ENCODE measurements at regions of chr1 and their contacts with region 1.

Region 1: GRCh38 chr1:74733604-74734484 is 892 bp downstream of the TYW3 start:
- DNase-seq: peak; percentile 24
- H3K4me3 Mint-ChIP-seq: peak overlapping the region; percentile 89
- H3K27ac Mint-ChIP-seq: peak overlapping the region; percentile 96
- H3K4me1 Mint-ChIP-seq: peaks cover 35% of the 10 kb centered on the region
- H3K27me3 Mint-ChIP-seq: no peaks in the 10 kb centered on the region

Region 2: DNA sequence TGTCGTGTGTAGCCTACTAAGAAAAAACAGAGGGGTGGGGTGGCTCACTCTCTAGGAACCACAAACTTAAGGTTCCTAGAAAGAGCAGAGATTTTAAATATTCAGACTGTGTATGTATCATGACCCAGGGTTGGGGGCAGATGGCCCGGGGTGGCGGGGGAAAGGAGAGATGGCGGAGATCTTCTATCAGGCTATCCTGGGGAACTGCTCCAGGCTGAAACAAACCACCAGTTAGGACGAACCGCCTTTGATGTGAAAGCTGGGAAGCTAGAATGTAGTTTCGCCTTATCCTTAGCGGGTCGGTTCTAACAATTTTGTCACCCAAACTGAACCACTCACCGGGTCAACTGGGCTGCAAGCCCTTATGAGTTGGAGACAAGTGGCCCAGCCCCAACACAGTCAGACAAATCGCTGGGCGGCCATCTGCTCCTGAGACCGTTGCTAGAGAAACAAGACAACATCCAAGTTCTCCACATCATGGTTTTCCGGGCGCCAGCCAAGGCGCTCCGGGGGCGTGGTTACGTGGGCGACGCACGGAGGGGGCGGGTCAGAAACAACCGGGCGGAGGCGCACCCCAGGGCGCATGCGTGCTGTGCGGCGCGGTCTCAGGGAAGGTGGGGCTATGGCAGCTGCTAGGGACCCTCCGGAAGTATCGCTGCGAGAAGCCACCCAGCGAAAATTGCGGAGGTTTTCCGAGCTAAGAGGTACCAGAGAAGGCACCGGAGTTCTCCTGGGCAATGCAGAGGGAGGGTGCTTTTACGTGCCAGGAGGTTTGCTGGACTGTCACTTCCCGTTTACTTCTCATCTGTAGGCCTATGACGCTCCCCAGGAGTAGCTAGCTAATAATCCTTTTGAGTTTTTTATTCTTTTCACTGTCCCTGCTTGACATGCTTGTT is 535.9 kb before region 1 on chr1 and contains the starts of genes FPGT and LRRIQ3:
- intact Hi-C with region 1: loop called (anchors 5 kb)
- DNase-seq: peak; percentile 93
- H3K4me3 Mint-ChIP-seq: peak within 1 kb of the TSS; percentile 88
- H3K27ac Mint-ChIP-seq: peak within 1 kb of the TSS; percentile 87
- H3K4me1 Mint-ChIP-seq: peaks cover 13% of the 10 kb centered on the region
- H3K27me3 Mint-ChIP-seq: peaks cover 6% of the 10 kb centered on the region
- total RNA-seq, gene FPGT: 9.2 and 11.6 TPM in 2 replicates
- total RNA-seq, gene LRRIQ3: 0.46 and 0.55 TPM in 2 replicates

Region 3: DNA sequence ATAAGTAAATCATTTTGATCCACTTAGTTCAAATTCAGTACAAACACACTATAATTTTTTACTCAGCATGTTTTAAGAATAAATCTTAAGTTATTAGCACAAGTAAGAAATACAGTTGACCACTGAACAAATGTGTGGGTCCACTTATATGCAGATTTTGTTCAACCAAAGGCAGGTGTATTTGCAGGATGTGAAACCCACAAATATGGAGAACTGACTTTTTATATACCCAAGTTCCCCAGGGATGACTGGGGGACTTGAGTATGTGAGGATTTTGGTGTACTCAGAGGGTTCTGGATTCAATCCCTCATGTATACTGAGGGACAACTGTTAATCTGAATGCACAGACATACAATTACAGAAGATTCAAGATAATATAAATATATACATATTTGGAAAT is 34.5 kb before region 1 on chr1:
- intact Hi-C with region 1: loop called (anchors 5 kb)
- DNase-seq: no peak
- H3K4me3 Mint-ChIP-seq: no peak overlapping the region
- H3K27ac Mint-ChIP-seq: no peak overlapping the region
- H3K4me1 Mint-ChIP-seq: peaks cover 3% of the 10 kb centered on the region
- H3K27me3 Mint-ChIP-seq: peaks cover 2% of the 10 kb centered on the region

Region 4: DNA sequence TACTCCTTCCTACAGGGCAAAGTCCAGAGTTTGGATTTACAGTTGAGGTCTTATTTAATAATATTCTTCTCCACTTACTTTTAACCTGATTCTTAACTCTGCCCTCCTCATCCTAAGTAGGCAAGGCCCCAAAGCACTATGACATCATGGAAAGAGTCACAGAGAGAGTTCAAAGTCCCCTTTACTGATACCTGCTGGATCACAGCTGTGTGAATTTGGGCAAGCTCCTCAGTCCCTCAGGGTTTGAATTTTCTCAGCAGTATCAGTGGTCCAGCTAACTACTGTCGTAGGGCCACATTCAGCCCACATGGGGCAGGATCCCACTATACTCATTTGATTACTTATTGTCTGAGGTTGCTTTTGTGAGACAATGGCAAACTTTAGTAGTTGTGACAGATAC is 15.1 kb after region 1 on chr1:
- intact Hi-C with region 1: loop called (anchors 1 kb)
- DNase-seq: no peak
- H3K4me3 Mint-ChIP-seq: no peak overlapping the region
- H3K27ac Mint-ChIP-seq: no peak overlapping the region
- H3K4me1 Mint-ChIP-seq: no peaks in the 10 kb centered on the region
- H3K27me3 Mint-ChIP-seq: no peaks in the 10 kb centered on the region

Region 5: DNA sequence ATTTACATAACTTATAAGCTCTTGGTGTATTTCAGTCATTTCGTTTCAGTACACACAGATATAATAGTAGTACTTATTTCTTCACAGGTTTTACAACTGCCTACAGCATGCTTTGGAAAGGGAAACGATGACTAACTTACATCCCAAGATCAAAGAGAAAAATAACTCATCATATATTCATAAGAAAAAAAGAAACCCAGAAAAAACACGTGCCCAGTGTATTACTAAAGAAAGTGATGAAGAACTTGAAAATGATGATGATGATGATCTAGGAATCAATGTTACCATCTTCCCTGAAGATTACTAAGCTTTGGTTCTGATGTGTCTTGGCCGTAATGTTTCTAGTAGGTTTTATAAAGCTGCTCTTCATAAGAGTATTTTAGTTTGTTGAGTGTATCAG is 30.0 kb after region 1 on chr1:
- intact Hi-C with region 1: loop called (anchors 2 kb)
- DNase-seq: no peak
- H3K4me3 Mint-ChIP-seq: no peak overlapping the region
- H3K27ac Mint-ChIP-seq: peak overlapping the region; percentile 40
- H3K4me1 Mint-ChIP-seq: peaks cover 10% of the 10 kb centered on the region
- H3K27me3 Mint-ChIP-seq: no peaks in the 10 kb centered on the region

Region 6: GRCh38 chr1:75785983-75786853 is 1052.4 kb after region 1 on chr1 and contains the start of gene RABGGTB:
- intact Hi-C with region 1: loop called (anchors 2 kb)
- DNase-seq: peak; percentile 93
- H3K4me3 Mint-ChIP-seq: peak within 1 kb of the TSS; percentile 100
- H3K27ac Mint-ChIP-seq: peak within 1 kb of the TSS; percentile 97
- H3K4me1 Mint-ChIP-seq: peaks cover 37% of the 10 kb centered on the region
- H3K27me3 Mint-ChIP-seq: peaks cover 4% of the 10 kb centered on the region
- total RNA-seq, gene RABGGTB: 219 and 230 TPM in 2 replicates

Measured in activated T-helper 2 cell treated with anti-CD3 and anti-CD28 coated beads, Interferon-gamma antibody, Interleukin-2, Interleukin-4, amounts not matched to agents 10 μg/mL and 5 μg/mL and 100 μg/mL, durations not matched to agents 14 hours and 24 hours and 36 hours (primary cell).